Activated CD4-positive, alpha-beta memory T cell treated with anti-CD3 and anti-CD28 coated beads for 36 hours (primary cell): ENCODE measurements at regions of chr3 and their contacts with region 1.

Region 1: GRCh38 chr3:4807381-4808280 is 171.6 kb upstream of the BHLHE40 start:
- DNase-seq: no peak
- H3K4me3 Mint-ChIP-seq: peak overlapping the region; percentile 45
- H3K27ac Mint-ChIP-seq: peak overlapping the region; percentile 4
- H3K4me1 Mint-ChIP-seq: peaks cover 42% of the 10 kb centered on the region
- H3K27me3 Mint-ChIP-seq: no peaks in the 10 kb centered on the region

Region 2: DNA sequence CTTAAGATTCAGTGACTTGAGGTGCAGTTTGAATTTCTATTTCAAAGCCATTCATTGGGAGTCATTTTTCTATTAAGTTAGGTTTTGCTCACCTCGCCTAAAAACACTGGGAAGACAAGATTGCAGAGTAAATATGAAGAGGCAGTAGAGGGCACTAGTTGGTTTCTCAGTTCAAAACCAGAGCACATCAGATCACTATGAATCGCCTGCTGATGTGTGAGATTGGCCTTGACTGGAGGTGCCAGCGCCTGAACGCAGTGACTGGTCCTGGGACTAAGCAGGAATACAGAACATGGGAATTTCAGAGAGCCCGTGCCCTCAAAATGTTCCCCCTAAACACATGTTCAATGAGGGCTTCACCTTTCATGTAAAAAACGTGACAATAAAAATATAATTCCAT is 85.5 kb before region 1 on chr3:
- CTCF ChIA-PET with region 1: interaction called, 3 read pairs
- POLR2A ChIA-PET with region 1: no interaction called
- intact Hi-C with region 1: loop called (anchors 5 kb)
- DNase-seq: peak; percentile 41
- H3K4me3 Mint-ChIP-seq: no peak overlapping the region
- H3K27ac Mint-ChIP-seq: no peak overlapping the region
- H3K4me1 Mint-ChIP-seq: peaks cover 19% of the 10 kb centered on the region
- H3K27me3 Mint-ChIP-seq: no peaks in the 10 kb centered on the region

Region 3: GRCh38 chr3:4751502-4752101 is 56.0 kb before region 1 on chr3:
- CTCF ChIA-PET with region 1: no interaction called
- POLR2A ChIA-PET with region 1: interaction called, 4 read pairs
- intact Hi-C with region 1: loop called (anchors 1 kb)
- DNase-seq: no peak
- H3K4me3 Mint-ChIP-seq: no peak overlapping the region
- H3K27ac Mint-ChIP-seq: peak overlapping the region; percentile 71
- H3K4me1 Mint-ChIP-seq: peaks cover 48% of the 10 kb centered on the region
- H3K27me3 Mint-ChIP-seq: no peaks in the 10 kb centered on the region

Region 4: DNA sequence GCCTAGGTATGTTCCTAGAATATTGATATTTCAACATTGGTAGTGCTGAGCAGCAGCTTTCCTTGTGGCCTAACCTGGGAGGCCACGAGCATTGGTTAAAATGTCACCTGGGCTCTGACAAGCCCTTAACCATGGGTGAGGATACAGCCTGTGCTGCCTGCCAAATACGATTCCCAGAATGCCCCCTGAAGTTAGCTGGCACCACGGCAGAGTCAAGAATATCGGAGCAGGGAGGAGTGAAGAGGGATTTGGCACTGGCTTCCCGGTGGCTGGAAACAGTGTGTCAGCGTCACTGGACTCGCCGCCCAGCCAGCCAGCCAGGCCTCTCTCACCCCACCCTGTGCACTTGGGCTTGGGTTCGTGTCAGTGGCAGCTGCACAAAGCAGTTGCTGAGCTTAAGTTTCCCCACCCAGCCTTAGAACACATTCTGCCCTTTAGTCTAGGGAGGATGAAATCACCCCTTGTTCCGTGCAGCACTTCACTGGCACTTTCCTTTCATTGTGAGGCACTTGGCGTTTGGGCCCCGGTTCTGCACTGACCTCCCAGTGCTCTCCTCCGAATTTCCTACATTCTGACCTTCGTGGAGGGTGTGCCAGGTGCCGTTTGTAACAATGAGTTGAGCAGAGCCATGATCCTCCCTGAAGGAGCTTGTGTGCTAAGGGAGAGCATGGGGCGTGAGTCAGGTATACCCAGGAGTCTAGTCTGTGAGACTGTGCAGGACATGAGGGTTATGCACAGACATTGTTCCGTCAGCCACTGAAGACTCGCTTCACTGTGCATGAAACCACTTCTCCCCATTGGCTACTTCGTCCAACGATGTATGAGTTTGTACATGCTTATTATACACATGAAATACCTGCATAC is 18.8 kb after region 1 on chr3:
- CTCF ChIA-PET with region 1: interaction called, 5 read pairs
- POLR2A ChIA-PET with region 1: interaction called, 24 read pairs
- intact Hi-C with region 1: loop called (anchors 1 kb)
- DNase-seq: no peak
- H3K4me3 Mint-ChIP-seq: peak overlapping the region; percentile 70
- H3K27ac Mint-ChIP-seq: peak overlapping the region; percentile 85
- H3K4me1 Mint-ChIP-seq: peaks cover 94% of the 10 kb centered on the region
- H3K27me3 Mint-ChIP-seq: no peaks in the 10 kb centered on the region

Region 5: GRCh38 chr3:4850928-4851265 is 43.3 kb after region 1 on chr3:
- CTCF ChIA-PET with region 1: interaction called, 5 read pairs
- POLR2A ChIA-PET with region 1: interaction called, 21 read pairs
- intact Hi-C with region 1: loop called (anchors 1 kb)
- DNase-seq: peak; percentile 43
- H3K4me3 Mint-ChIP-seq: peak overlapping the region; percentile 53
- H3K27ac Mint-ChIP-seq: peak overlapping the region; percentile 88
- H3K4me1 Mint-ChIP-seq: peaks cover 88% of the 10 kb centered on the region
- H3K27me3 Mint-ChIP-seq: no peaks in the 10 kb centered on the region

Region 6: GRCh38 chr3:5165698-5166097 is 358.1 kb after region 1 on chr3:
- CTCF ChIA-PET with region 1: no interaction called
- POLR2A ChIA-PET with region 1: no interaction called
- intact Hi-C with region 1: no loop called
- DNase-seq: no peak
- H3K4me3 Mint-ChIP-seq: no peak overlapping the region
- H3K27ac Mint-ChIP-seq: no peak overlapping the region
- H3K4me1 Mint-ChIP-seq: peaks cover 65% of the 10 kb centered on the region
- H3K27me3 Mint-ChIP-seq: no peaks in the 10 kb centered on the region

Region 7: GRCh38 chr3:5376761-5377160 is 569.1 kb after region 1 on chr3:
- CTCF ChIA-PET with region 1: no interaction called
- POLR2A ChIA-PET with region 1: no interaction called
- intact Hi-C with region 1: no loop called
- DNase-seq: no peak
- H3K4me3 Mint-ChIP-seq: no peak overlapping the region
- H3K27ac Mint-ChIP-seq: no peak overlapping the region
- H3K4me1 Mint-ChIP-seq: no peaks in the 10 kb centered on the region
- H3K27me3 Mint-ChIP-seq: no peaks in the 10 kb centered on the region